Calu3 (cell line): ENCODE measurements at regions of chr2 and their contacts with region 1.

Region 1: GRCh38 chr2:168002021-168002553 is 245.3 kb downstream of the STK39 start:
- DNase-seq: no peak
- H3K4me3 Mint-ChIP-seq: no peak overlapping the region
- H3K27ac Mint-ChIP-seq: peak overlapping the region; percentile 73
- H3K4me1 Mint-ChIP-seq: peaks cover 8% of the 10 kb centered on the region
- H3K27me3 Mint-ChIP-seq: no peaks in the 10 kb centered on the region
- CTCF ChIP-seq: no peak

Region 2: GRCh38 chr2:168015274-168015953 is 13.3 kb after region 1 on chr2:
- CTCF ChIA-PET with region 1: interaction called, 3 read pairs
- intact Hi-C with region 1: loop called (anchors 1 kb)
- DNase-seq: no peak
- H3K4me3 Mint-ChIP-seq: no peak overlapping the region
- H3K27ac Mint-ChIP-seq: no peak overlapping the region
- H3K4me1 Mint-ChIP-seq: no peaks in the 10 kb centered on the region
- H3K27me3 Mint-ChIP-seq: no peaks in the 10 kb centered on the region
- CTCF ChIP-seq: no peak